ENCODE measurements at regions of chr1 and their contacts with region 1.

Region 1: DNA sequence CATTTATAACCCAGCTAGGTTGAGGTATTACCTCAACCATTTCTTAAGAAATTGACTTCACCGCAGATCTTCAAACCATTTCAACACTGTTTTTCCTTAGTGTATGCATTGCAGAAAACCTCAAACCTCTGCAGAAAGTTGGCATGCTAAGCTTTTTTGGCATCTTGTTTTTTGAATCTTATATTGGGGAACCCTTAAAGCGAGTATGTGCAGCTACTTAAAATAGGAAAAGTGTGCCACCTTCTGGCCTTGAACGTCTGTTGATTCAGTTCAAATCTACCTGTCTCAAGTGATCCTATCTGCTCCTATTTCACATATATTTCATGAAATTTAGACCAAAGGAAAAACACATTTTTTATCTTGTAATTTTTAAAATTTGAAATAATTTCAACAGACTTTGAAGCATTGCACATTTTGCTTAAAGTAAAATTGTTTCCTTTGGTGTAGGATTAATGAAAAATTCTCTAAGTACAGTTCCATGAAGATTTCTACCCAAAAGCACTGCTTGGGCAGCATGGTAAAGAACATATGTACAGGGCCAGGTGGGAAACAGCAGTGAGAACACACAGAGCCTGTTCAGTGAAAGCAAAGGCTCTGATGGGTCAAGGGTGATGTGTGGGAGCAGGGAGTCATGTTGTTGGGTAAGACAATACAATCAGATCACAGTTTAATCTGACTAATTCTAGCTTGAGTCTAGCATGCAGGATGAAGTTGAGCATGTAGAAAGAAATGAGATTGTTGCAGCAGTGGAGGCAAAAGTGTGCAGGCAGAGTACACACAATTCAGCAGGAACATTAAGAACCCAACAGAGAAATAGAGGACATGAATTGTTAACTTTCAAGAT is 17.2 kb downstream of the HENMT1 start:
- DNase-seq: peak in 1 of 2 donors; percentile 86
- ATAC-seq: no peak
- H3K4me3 ChIP-seq: no peak overlapping the region
- H3K4me3 Mint-ChIP-seq: peak overlapping the region; percentile 57
- H3K27ac ChIP-seq: peak overlapping the region; percentile 96
- H3K27ac Mint-ChIP-seq: peak overlapping the region; percentile 98
- H3K4me1 ChIP-seq: peaks cover 72% of the 10 kb centered on the region
- H3K4me1 Mint-ChIP-seq: peaks cover 78 to 79% of the 10 kb centered on the region in 2 donors
- H3K27me3 ChIP-seq: no peaks in the 10 kb centered on the region
- H3K27me3 Mint-ChIP-seq: no peaks in the 10 kb centered on the region
- CTCF ChIP-seq: peak; percentile 69

Region 2: GRCh38 chr1:108199781-108200570 is 443.7 kb before region 1 on chr1 and contains the start of gene SLC25A24:
- intact Hi-C with region 1: loop called (anchors 10 kb)
- DNase-seq: peak; percentile 53 to 81
- ATAC-seq: peak; percentile 89 to 97 (median 91)
- H3K4me3 ChIP-seq: peak within 1 kb of the TSS; percentile 97
- H3K4me3 Mint-ChIP-seq: peak within 1 kb of the TSS; percentile 92
- H3K27ac ChIP-seq: peak within 1 kb of the TSS; percentile 80
- H3K27ac Mint-ChIP-seq: peak within 1 kb of the TSS; percentile 75 to 89
- H3K4me1 ChIP-seq: peaks cover 15% of the 10 kb centered on the region
- H3K4me1 Mint-ChIP-seq: peaks cover 34 to 37% of the 10 kb centered on the region in 2 donors
- H3K27me3 ChIP-seq: no peaks in the 10 kb centered on the region
- H3K27me3 Mint-ChIP-seq: peaks cover 0 to 14% of the 10 kb centered on the region in 2 donors
- CTCF ChIP-seq: no peak
- total RNA-seq, gene SLC25A24: 7.6 to 11.5 (median 11.3) TPM

Region 3: DNA sequence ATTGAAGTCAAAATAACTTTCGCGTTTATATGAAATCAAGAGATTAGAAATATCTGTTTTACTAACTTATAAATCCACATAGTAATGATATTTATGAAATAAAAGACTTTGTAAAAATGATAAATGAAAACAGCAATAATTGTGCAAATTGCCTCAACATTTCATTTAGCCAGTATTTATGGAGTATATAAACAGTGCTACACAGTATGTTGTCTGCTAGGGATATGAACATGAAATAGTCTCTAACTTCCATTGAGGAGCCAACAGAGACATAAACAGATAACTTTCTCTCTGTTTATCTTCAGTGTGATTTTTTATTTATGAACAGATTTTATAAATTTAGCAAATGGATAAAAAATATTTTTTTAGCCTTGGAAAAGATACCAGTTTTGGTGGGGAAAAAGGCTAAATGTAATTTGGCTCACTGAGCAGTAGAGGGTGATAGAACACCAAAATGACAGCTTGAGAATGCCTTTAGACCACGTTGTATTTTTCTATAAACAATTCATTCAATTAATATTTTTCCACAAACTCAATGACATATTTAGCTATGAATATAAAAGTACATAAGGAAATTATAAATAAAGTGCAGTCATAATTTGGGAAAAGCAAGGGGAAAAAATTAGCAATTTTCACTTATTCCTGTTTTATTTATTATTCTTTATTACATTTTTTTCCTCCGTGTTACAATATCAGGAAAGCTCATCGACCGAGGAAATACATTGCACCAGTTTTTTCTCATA is 131.3 kb before region 1 on chr1:
- intact Hi-C with region 1: loop called (anchors 1 kb)
- DNase-seq: peak in 1 of 2 donors; percentile 78
- ATAC-seq: peak; percentile 59 to 82 (median 79)
- H3K4me3 ChIP-seq: no peak overlapping the region
- H3K4me3 Mint-ChIP-seq: no peak overlapping the region
- H3K27ac ChIP-seq: no peak overlapping the region
- H3K27ac Mint-ChIP-seq: no peak overlapping the region
- H3K4me1 ChIP-seq: no peaks in the 10 kb centered on the region
- H3K4me1 Mint-ChIP-seq: no peaks in the 10 kb centered on the region
- H3K27me3 ChIP-seq: no peaks in the 10 kb centered on the region
- H3K27me3 Mint-ChIP-seq: peaks cover 12% of the 10 kb centered on the region in 2 donors
- CTCF ChIP-seq: peak; percentile 97

Region 4: GRCh38 chr1:108559215-108560186 is 84.2 kb before region 1 on chr1 and contains the start of gene EEIG2:
- intact Hi-C with region 1: loop called (anchors 2 kb)
- DNase-seq: peak; percentile 85 to 95
- ATAC-seq: peak; percentile 88 to 95 (median 91)
- H3K4me3 ChIP-seq: peak within 1 kb of the TSS; percentile 74
- H3K4me3 Mint-ChIP-seq: peak within 1 kb of the TSS; percentile 95
- H3K27ac ChIP-seq: peak within 1 kb of the TSS; percentile 52
- H3K27ac Mint-ChIP-seq: peak within 1 kb of the TSS; percentile 86 to 88
- H3K4me1 ChIP-seq: peaks cover 28% of the 10 kb centered on the region
- H3K4me1 Mint-ChIP-seq: peaks cover 30% of the 10 kb centered on the region in 2 donors
- H3K27me3 ChIP-seq: no peaks in the 10 kb centered on the region
- H3K27me3 Mint-ChIP-seq: no peaks in the 10 kb centered on the region
- CTCF ChIP-seq: peak; percentile 74
- total RNA-seq, gene EEIG2: 18.2 to 23.9 (median 20.3) TPM

Region 5: GRCh38 chr1:108590957-108591356 is 52.8 kb before region 1 on chr1:
- intact Hi-C with region 1: loop called (anchors 1 kb)
- DNase-seq: peak in 1 of 2 donors; percentile 86
- ATAC-seq: peak; percentile 71 to 84 (median 84)
- H3K4me3 ChIP-seq: no peak overlapping the region
- H3K4me3 Mint-ChIP-seq: peak overlapping the region; percentile 64
- H3K27ac ChIP-seq: peak overlapping the region; percentile 88
- H3K27ac Mint-ChIP-seq: peak overlapping the region; percentile 88 to 91
- H3K4me1 ChIP-seq: peaks cover 14% of the 10 kb centered on the region
- H3K4me1 Mint-ChIP-seq: peaks cover 49 to 53% of the 10 kb centered on the region in 2 donors
- H3K27me3 ChIP-seq: no peaks in the 10 kb centered on the region
- H3K27me3 Mint-ChIP-seq: no peaks in the 10 kb centered on the region
- CTCF ChIP-seq: no peak

Region 6: DNA sequence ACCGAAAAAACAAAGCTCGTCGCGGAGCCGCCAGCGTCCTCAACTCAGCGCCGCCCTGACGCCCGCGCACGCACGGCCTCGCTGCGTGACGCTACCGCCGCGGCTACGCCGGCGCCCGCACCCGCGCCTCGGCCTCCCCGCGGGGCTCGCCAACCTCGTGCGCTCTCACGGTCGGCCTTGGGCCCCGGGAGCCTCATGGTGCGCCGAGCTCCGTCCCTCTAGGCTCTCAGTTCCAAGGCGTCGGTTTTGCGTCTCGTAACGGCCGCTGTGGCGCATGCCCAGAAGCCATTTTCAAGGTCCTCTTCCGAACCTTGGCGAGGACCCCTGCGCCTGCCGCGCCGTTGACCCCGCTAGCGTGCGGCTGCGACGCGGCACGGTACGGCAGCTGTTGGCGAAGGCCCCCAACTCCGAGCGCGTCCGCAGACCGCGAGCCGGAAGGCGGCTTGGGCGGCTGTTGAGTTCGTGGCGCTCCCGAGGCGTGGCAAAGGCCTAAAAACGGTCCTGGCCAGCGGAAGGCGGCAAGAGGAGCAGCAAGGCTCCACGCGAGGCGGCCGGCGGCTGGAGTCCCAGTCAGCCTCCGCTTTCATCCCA is 17.4 kb after region 1 on chr1 and contains the start of gene HENMT1:
- intact Hi-C with region 1: loop called (anchors 2 kb)
- DNase-seq: peak; percentile 71 to 94
- ATAC-seq: peak; percentile 79 to 91 (median 81)
- H3K4me3 ChIP-seq: peak within 1 kb of the TSS; percentile 51
- H3K4me3 Mint-ChIP-seq: peak within 1 kb of the TSS; percentile 86
- H3K27ac ChIP-seq: peak within 1 kb of the TSS; percentile 96
- H3K27ac Mint-ChIP-seq: peak within 1 kb of the TSS; percentile 94 to 96
- H3K4me1 ChIP-seq: peaks cover 19% of the 10 kb centered on the region
- H3K4me1 Mint-ChIP-seq: peaks cover 30 to 53% of the 10 kb centered on the region in 2 donors
- H3K27me3 ChIP-seq: no peaks in the 10 kb centered on the region
- H3K27me3 Mint-ChIP-seq: no peaks in the 10 kb centered on the region
- CTCF ChIP-seq: no peak
- total RNA-seq, gene HENMT1: 26.9 to 41.5 (median 30.6) TPM

Region 7: GRCh38 chr1:108732398-108732797 is 88.7 kb after region 1 on chr1:
- intact Hi-C with region 1: no loop called
- DNase-seq: no peak
- ATAC-seq: no peak
- H3K4me3 ChIP-seq: no peak overlapping the region
- H3K4me3 Mint-ChIP-seq: no peak overlapping the region
- H3K27ac ChIP-seq: no peak overlapping the region
- H3K27ac Mint-ChIP-seq: no peak overlapping the region
- H3K4me1 ChIP-seq: no peaks in the 10 kb centered on the region
- H3K4me1 Mint-ChIP-seq: no peaks in the 10 kb centered on the region
- H3K27me3 ChIP-seq: no peaks in the 10 kb centered on the region
- H3K27me3 Mint-ChIP-seq: peaks cover 14 to 15% of the 10 kb centered on the region in 2 donors
- CTCF ChIP-seq: no peak

Region 8: GRCh38 chr1:108746372-108747205 is 102.9 kb after region 1 on chr1 and contains the start of gene STXBP3:
- intact Hi-C with region 1: loop called (anchors 1 kb)
- DNase-seq: peak; percentile 100
- ATAC-seq: peak; percentile 90 to 97 (median 91)
- H3K4me3 ChIP-seq: peak within 1 kb of the TSS; percentile 98
- H3K4me3 Mint-ChIP-seq: peak within 1 kb of the TSS; percentile 100
- H3K27ac ChIP-seq: peak within 1 kb of the TSS; percentile 99
- H3K27ac Mint-ChIP-seq: peak within 1 kb of the TSS; percentile 97 to 100
- H3K4me1 ChIP-seq: peaks cover 13% of the 10 kb centered on the region
- H3K4me1 Mint-ChIP-seq: peaks cover 36 to 37% of the 10 kb centered on the region in 2 donors
- H3K27me3 ChIP-seq: no peaks in the 10 kb centered on the region
- H3K27me3 Mint-ChIP-seq: peaks cover 3 to 6% of the 10 kb centered on the region in 2 donors
- CTCF ChIP-seq: peak; percentile 88
- total RNA-seq, gene STXBP3: 63.1 to 71.4 (median 69.2) TPM

Measured in natural killer cell (primary cell).